Caco-2 (cell line): ENCODE measurements at regions of chr6 and their contacts with region 1.

Region 1: DNA sequence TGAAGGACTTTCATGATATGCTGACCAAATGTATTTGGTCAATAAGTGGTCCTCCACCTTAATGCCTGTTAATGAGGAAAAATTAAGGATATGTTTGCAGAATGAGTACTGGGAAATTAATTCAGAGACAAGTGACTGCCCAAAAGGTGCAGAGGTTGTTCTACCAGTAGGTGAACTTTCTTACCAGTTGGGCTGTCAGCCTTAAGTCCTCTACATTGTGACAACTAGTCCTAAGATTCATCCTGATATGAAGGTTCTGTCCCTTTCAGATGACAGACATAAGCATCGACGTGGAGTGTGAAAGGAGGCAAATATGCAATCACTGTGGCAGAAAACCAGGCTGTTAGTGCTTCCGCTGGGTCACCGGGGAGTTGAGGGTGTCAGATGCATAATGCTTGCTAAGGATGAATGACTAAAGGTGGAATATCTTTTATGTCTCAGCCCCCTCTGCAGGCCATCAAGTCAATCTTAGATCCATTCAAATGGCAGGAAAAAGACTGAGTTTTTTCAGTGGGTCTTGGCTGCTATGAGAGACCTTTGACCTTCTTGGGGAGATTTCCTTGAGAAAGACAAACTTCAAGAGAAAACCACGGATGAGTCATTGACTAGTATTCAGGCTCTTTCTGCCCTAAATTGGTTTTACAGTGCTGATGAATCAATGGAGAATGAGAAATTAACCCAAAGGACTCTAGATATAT is 226.0 kb downstream of the TPBG start:
- DNase-seq: peak; percentile 38
- H3K4me3 ChIP-seq: no peak overlapping the region
- H3K4me3 Mint-ChIP-seq: no peak overlapping the region
- H3K27ac Mint-ChIP-seq: no peak overlapping the region
- H3K4me1 ChIP-seq: peaks cover 19% of the 10 kb centered on the region
- H3K4me1 Mint-ChIP-seq: peaks cover 14% of the 10 kb centered on the region
- H3K27me3 ChIP-seq: no peaks in the 10 kb centered on the region
- H3K27me3 Mint-ChIP-seq: no peaks in the 10 kb centered on the region
- CTCF ChIP-seq: peak in 1 of 2 experiments; percentile 50

Region 2: DNA sequence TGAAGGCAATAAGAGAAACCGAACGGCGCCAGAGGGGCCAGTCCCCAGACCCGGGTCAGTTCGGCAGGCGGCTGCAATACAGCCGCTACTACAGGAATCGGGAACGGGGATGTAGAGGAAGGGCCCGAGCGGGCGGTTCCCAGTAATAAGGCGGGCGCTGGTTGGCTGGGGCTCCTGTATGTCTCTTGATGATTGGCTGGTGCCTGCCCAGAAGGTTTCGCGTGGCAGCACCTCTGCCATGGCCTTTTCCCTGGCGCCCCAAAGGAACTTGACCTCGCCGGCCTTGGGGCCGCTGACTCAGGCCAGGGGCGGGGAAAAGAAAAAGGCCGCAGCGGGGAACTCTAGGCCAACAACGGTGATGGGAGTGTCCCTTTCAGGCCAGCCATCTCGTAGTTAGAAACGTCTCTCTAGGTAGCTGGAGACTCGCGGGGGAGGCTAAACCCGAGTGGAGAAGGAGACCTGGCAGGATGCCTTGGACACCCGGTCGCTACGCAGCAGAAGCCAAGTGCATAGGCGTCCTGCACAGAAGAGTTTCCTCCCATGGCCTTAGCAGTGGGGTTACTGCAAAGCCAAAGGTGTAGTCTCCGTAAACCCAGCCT is 341.9 kb before region 1 on chr6 and contains the start of gene IBTK:
- CTCF ChIA-PET with region 1: no interaction called
- POLR2A ChIA-PET with region 1: no interaction called
- intact Hi-C with region 1: loop called (anchors 1 kb)
- DNase-seq: peak; percentile 95 to 97
- H3K4me3 ChIP-seq: peak within 1 kb of the TSS; percentile 74
- H3K4me3 Mint-ChIP-seq: peak within 1 kb of the TSS; percentile 90
- H3K27ac Mint-ChIP-seq: peak within 1 kb of the TSS; percentile 96
- H3K4me1 ChIP-seq: peaks cover 28% of the 10 kb centered on the region
- H3K4me1 Mint-ChIP-seq: peaks cover 20% of the 10 kb centered on the region
- H3K27me3 ChIP-seq: no peaks in the 10 kb centered on the region
- H3K27me3 Mint-ChIP-seq: no peaks in the 10 kb centered on the region
- CTCF ChIP-seq: no peak
- total RNA-seq, gene IBTK: 29.4 and 30.3 TPM in 2 replicates

Region 3: GRCh38 chr6:82270881-82271645 is 318.6 kb before region 1 on chr6:
- CTCF ChIA-PET with region 1: no interaction called
- POLR2A ChIA-PET with region 1: no interaction called
- intact Hi-C with region 1: loop called (anchors 1 kb)
- DNase-seq: no peak
- H3K4me3 ChIP-seq: no peak overlapping the region
- H3K4me3 Mint-ChIP-seq: no peak overlapping the region
- H3K27ac Mint-ChIP-seq: no peak overlapping the region
- H3K4me1 ChIP-seq: no peaks in the 10 kb centered on the region
- H3K4me1 Mint-ChIP-seq: peaks cover 6% of the 10 kb centered on the region
- H3K27me3 ChIP-seq: no peaks in the 10 kb centered on the region
- H3K27me3 Mint-ChIP-seq: no peaks in the 10 kb centered on the region
- CTCF ChIP-seq: peak; percentile 58 to 71

Region 4: GRCh38 chr6:82331031-82331773 is 258.5 kb before region 1 on chr6:
- CTCF ChIA-PET with region 1: no interaction called
- POLR2A ChIA-PET with region 1: no interaction called
- intact Hi-C with region 1: loop called (anchors 1 kb)
- DNase-seq: peak in 1 of 2 experiments; percentile 22
- H3K4me3 ChIP-seq: no peak overlapping the region
- H3K4me3 Mint-ChIP-seq: no peak overlapping the region
- H3K27ac Mint-ChIP-seq: no peak overlapping the region
- H3K4me1 ChIP-seq: 0 out of 2 replicates have a peak, but pooled peaks cover 7% of the 10 kb centered on the region
- H3K4me1 Mint-ChIP-seq: no peaks in the 10 kb centered on the region
- H3K27me3 ChIP-seq: no peaks in the 10 kb centered on the region
- H3K27me3 Mint-ChIP-seq: peaks cover 3% of the 10 kb centered on the region
- CTCF ChIP-seq: peak in 1 of 2 experiments; percentile 4

Region 5: GRCh38 chr6:82363351-82364086 is 226.1 kb before region 1 on chr6 and contains the start of gene TPBG:
- CTCF ChIA-PET with region 1: no interaction called
- POLR2A ChIA-PET with region 1: no interaction called
- intact Hi-C with region 1: loop called (anchors 2 kb)
- DNase-seq: peak; percentile 66 to 68
- H3K4me3 ChIP-seq: peak within 1 kb of the TSS; percentile 62
- H3K4me3 Mint-ChIP-seq: peak within 1 kb of the TSS; percentile 85
- H3K27ac Mint-ChIP-seq: peak within 1 kb of the TSS; percentile 54
- H3K4me1 ChIP-seq: no peaks in the 10 kb centered on the region; the same call in 1 of the 2 replicates
- H3K4me1 Mint-ChIP-seq: peaks cover 8% of the 10 kb centered on the region
- H3K27me3 ChIP-seq: no peaks in the 10 kb centered on the region; the same call in 1 of the 2 replicates
- H3K27me3 Mint-ChIP-seq: peaks cover 23% of the 10 kb centered on the region
- CTCF ChIP-seq: peak in 1 of 2 experiments; percentile 45
- total RNA-seq, gene TPBG: 4.0 and 4.3 TPM in 2 replicates

Region 6: DNA sequence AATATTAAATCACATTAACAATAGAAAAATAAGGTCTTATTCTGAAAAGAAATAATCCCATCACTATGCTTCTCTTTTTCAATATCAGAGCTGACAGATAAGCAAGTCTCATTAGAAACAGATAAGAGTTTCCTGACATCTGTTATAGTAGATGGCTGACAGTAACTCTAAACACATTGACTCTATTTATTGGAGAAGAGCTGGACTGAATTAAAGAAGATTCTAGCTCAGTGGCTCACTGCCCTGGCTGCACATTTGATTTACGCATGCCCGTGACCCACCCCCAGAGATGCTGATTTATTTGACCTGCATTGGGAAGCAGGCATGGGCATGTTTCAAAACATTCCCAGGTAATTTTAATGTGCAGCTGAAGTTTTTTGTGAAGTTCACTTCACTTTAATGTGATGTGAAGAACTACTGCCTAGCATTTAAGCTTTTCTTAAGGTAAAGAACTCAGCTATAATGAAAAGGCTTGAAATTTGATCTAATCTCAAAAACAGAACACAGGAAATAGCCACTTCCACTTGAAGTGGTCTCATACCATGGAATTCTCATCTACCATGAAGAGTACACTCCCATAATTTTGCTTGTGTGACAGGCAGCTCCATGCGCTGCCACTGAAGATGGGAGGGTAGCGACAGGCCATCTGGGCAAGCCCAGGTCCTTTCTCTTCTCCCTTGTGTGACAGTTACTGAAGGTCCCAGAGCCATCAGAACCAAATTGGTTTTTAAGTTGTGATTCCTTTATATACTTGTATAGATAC is 63.7 kb before region 1 on chr6:
- CTCF ChIA-PET with region 1: no interaction called
- POLR2A ChIA-PET with region 1: no interaction called
- intact Hi-C with region 1: loop called (anchors 10 kb)
- DNase-seq: no peak
- H3K4me3 ChIP-seq: no peak overlapping the region
- H3K4me3 Mint-ChIP-seq: no peak overlapping the region
- H3K27ac Mint-ChIP-seq: no peak overlapping the region
- H3K4me1 ChIP-seq: no peaks in the 10 kb centered on the region
- H3K4me1 Mint-ChIP-seq: no peaks in the 10 kb centered on the region
- H3K27me3 ChIP-seq: no peaks in the 10 kb centered on the region
- H3K27me3 Mint-ChIP-seq: no peaks in the 10 kb centered on the region
- CTCF ChIP-seq: no peak

Region 7: DNA sequence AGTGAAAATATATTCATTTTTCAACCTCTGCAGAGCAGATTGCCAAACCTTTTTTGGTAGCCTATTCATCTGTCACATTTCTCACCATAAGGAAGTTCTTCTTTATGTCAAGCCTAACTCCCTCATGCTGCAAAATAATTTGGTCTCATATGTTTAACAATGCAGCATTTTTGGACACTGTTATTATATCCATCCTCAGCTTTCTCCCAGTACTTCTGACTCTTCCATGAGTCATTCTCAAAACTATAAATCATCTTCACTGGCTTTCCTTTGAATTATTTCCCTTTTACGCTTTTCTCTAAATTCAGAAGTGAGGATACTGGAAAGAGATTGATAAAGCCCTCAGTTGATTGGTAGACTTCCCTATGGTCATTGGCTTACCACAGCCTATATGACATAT is 33.9 kb before region 1 on chr6:
- CTCF ChIA-PET with region 1: no interaction called
- POLR2A ChIA-PET with region 1: no interaction called
- intact Hi-C with region 1: no loop called
- DNase-seq: no peak
- H3K4me3 ChIP-seq: no peak overlapping the region
- H3K4me3 Mint-ChIP-seq: no peak overlapping the region
- H3K27ac Mint-ChIP-seq: no peak overlapping the region
- H3K4me1 ChIP-seq: no peaks in the 10 kb centered on the region
- H3K4me1 Mint-ChIP-seq: peaks cover 8% of the 10 kb centered on the region
- H3K27me3 ChIP-seq: no peaks in the 10 kb centered on the region
- H3K27me3 Mint-ChIP-seq: no peaks in the 10 kb centered on the region
- CTCF ChIP-seq: no peak

Region 8: GRCh38 chr6:82646214-82646580 is 56.5 kb after region 1 on chr6:
- CTCF ChIA-PET with region 1: no interaction called
- POLR2A ChIA-PET with region 1: no interaction called
- intact Hi-C with region 1: no loop called
- DNase-seq: no peak
- H3K4me3 ChIP-seq: no peak overlapping the region
- H3K4me3 Mint-ChIP-seq: no peak overlapping the region
- H3K27ac Mint-ChIP-seq: no peak overlapping the region
- H3K4me1 ChIP-seq: no peaks in the 10 kb centered on the region
- H3K4me1 Mint-ChIP-seq: no peaks in the 10 kb centered on the region
- H3K27me3 ChIP-seq: no peaks in the 10 kb centered on the region
- H3K27me3 Mint-ChIP-seq: no peaks in the 10 kb centered on the region
- CTCF ChIP-seq: no peak